MCF 10A (cell line): ENCODE measurements at regions of chr5 and their contacts with region 1.

Region 1: DNA sequence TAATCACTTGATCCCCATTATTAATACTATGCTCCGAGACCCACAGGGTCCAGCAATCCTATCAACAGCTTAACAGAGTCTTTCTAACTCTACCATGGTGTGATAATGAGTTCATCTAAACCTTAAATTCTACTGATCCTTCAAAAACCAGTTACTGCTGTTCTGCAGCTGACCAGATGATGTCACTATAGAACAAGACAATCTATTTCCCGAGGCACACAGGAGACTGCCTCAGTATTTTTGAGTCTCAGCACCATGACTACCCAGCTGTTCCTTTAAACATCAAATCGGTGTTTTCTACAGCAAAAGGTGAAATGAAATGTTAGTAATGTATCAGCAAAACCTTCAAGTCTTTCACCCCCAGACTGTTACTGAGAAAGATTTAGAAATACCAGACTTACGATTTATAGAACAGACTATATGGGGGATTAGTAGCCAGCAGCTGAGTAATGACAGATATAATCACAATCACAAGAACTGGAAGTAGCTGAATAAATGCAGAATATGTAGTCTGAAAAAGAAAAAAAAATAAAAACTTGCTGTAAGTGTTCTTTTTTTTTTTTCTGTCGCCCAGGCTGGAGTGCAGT is 16.9 kb downstream of the DNAJC18 start:
- DNase-seq: peak; percentile 84
- H3K4me3 Mint-ChIP-seq: no peak overlapping the region
- H3K27ac Mint-ChIP-seq: peak overlapping the region; percentile 57
- H3K4me1 Mint-ChIP-seq: no peaks in the 10 kb centered on the region
- H3K27me3 Mint-ChIP-seq: no peaks in the 10 kb centered on the region
- CTCF ChIP-seq: peak; percentile 93

Region 2: DNA sequence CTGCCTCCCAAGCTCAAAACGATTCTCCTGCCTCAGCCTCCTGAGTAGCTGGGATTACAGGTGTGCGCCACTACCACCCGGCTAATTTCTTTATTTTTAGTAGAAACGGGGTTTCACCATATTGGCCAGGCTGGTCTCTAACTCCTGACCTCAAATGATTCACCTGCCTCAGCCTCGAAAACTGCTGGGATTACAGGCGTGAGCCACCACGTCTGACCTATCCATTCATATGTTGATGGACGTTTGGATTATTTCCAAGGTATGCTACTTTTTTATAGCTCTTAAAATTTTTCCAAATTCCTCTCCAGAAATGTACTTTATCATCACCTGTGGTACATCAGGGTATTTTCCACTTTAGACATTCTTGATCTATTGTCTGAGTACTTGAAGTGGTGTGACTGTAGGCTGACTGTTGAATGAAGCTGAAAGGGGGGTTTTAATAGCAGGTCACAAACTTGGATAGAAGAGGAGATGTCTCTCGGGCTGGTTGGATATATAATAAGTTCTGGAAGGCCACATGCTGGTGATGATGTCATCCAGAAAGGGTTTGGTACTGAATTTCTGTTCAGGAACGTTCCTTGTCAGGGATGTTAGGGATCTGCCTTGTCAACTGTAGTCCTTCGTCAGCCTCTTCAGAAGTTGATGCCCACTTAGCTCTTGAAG is 661.8 kb before region 1 on chr5:
- CTCF ChIA-PET with region 1: no interaction called
- POLR2A ChIA-PET with region 1: no interaction called
- intact Hi-C with region 1: no loop called
- DNase-seq: peak; percentile 37
- H3K4me3 Mint-ChIP-seq: no peak overlapping the region
- H3K27ac Mint-ChIP-seq: peak overlapping the region; percentile 86
- H3K4me1 Mint-ChIP-seq: peaks cover 60% of the 10 kb centered on the region
- H3K27me3 Mint-ChIP-seq: no peaks in the 10 kb centered on the region
- CTCF ChIP-seq: no peak

Region 3: DNA sequence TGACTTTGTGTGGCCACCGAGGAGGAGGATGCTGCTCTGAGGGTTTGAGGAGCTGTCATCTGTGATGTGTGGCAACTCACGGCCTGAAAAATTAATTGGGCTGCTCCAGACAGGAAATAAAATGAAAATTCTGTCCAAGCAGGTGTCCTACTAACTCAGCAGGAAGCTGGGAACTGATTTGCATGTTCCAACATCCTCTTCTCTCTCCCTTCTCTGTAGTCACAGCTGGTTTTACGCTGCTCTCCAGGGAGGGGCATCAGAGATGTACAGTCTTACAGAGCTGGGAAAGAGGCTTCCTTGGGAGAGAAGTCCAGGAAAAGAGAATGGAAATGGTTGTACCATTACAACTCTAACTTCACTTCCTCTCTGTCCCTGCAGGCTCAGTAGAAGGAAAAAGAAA is 200.1 kb before region 1 on chr5:
- CTCF ChIA-PET with region 1: no interaction called
- POLR2A ChIA-PET with region 1: no interaction called
- intact Hi-C with region 1: no loop called
- DNase-seq: no peak
- H3K4me3 Mint-ChIP-seq: no peak overlapping the region
- H3K27ac Mint-ChIP-seq: no peak overlapping the region
- H3K4me1 Mint-ChIP-seq: peaks cover 5% of the 10 kb centered on the region
- H3K27me3 Mint-ChIP-seq: no peaks in the 10 kb centered on the region
- CTCF ChIP-seq: no peak

Region 4: GRCh38 chr5:139403787-139404483 is 18.5 kb before region 1 on chr5 and contains the start of gene SPATA24:
- CTCF ChIA-PET with region 1: interaction called, 111 read pairs
- POLR2A ChIA-PET with region 1: interaction called, 10 read pairs
- intact Hi-C with region 1: no loop called
- DNase-seq: peak; percentile 99
- H3K4me3 Mint-ChIP-seq: peak within 1 kb of the TSS; percentile 97
- H3K27ac Mint-ChIP-seq: peak within 1 kb of the TSS; percentile 99
- H3K4me1 Mint-ChIP-seq: peaks cover 23% of the 10 kb centered on the region
- H3K27me3 Mint-ChIP-seq: no peaks in the 10 kb centered on the region
- CTCF ChIP-seq: no peak
- total RNA-seq, gene SPATA24: 9.8 and 11.6 TPM in 2 replicates

Region 5: DNA sequence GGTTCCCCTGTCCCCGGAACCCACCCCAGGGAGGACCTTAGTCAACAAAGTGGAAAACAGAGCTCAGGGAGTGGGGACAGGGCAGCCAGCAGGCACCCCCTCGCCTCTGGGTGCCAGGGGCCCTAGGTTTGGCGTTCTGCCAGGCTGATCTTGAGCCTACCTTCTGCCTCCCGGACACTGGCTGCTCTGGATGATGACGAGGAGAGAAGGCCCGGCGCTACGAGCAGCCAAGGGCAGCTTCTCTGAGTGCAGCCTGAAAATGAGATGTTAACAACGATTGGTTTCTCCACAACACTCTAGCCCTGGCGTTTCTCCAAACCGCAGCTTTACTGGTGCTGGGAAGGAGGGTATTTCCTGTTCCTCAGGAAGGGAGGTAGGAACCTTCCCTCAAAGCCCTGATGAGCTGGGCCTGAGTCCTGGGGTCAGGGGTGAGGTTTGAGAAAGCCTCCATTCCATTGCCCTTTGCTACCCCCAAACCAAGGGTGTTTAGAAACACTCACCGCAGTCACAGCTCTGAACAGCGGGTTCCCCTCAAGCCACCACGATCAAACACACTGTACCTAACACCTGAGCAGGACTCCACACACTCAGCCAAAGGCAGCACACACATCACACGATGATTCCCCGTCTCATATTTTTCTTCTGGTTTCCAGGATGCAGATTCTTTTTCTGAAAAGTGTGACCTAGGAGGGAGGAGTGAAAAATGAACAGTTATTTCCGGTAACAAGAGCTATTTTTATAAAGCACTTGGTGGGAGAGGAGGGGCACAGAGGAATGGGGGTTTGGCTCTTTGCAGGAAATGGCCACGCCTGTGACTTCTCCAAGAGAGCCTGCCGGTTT is 59.9 kb after region 1 on chr5 and contains the start of gene STING1:
- CTCF ChIA-PET with region 1: interaction called, 13 read pairs
- POLR2A ChIA-PET with region 1: no interaction called
- intact Hi-C with region 1: no loop called
- DNase-seq: peak; percentile 100
- H3K4me3 Mint-ChIP-seq: peak within 1 kb of the TSS; percentile 77
- H3K27ac Mint-ChIP-seq: peak within 1 kb of the TSS; percentile 92
- H3K4me1 Mint-ChIP-seq: peaks cover 24% of the 10 kb centered on the region
- H3K27me3 Mint-ChIP-seq: no peaks in the 10 kb centered on the region
- CTCF ChIP-seq: peak; percentile 1
- total RNA-seq, gene STING1: 33.1 and 35.1 TPM in 2 replicates

Region 6: GRCh38 chr5:139501381-139501780 is 79.0 kb after region 1 on chr5:
- CTCF ChIA-PET with region 1: interaction called, 28 read pairs
- POLR2A ChIA-PET with region 1: no interaction called
- intact Hi-C with region 1: no loop called
- DNase-seq: no peak
- H3K4me3 Mint-ChIP-seq: no peak overlapping the region
- H3K27ac Mint-ChIP-seq: no peak overlapping the region
- H3K4me1 Mint-ChIP-seq: no peaks in the 10 kb centered on the region
- H3K27me3 Mint-ChIP-seq: no peaks in the 10 kb centered on the region
- CTCF ChIP-seq: no peak

Region 7: DNA sequence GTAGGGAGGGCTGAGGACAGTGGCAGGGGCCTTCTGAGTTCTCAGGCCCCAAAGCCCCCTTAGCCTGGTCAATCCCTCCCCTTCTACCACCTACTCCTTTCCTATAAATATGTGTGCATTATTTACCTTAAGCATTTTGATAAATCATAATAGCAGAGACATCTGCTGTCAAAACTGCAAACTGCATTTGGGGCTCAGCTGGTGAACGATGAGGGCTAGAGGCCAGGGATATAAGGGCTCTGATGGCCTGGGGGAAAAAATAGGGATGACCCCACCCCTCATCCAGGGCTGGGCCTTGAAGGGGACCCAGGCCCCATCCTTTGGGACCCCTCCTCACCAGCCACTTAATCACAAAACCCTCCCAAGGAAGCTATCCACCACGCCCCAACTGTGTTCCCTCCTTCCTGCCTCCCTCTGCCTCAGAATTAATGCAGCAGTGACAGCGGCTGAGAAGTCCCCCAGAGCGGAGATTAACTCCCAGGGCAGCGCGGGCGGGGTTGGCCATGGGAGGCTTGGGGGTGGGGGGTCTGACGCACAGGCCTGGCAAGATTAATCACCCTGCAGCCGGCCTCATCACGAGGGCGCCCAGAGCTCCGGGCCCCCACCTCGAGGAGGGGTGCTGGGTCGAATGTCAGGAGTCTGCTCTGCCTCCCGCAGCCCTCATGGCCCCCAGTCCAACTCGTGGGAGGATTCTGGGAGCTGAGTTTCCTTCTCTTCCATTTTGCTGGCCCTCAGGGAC is 267.8 kb after region 1 on chr5:
- CTCF ChIA-PET with region 1: interaction called, 18 read pairs
- POLR2A ChIA-PET with region 1: no interaction called
- intact Hi-C with region 1: loop called (anchors 1 kb)
- DNase-seq: peak; percentile 66
- H3K4me3 Mint-ChIP-seq: no peak overlapping the region
- H3K27ac Mint-ChIP-seq: no peak overlapping the region
- H3K4me1 Mint-ChIP-seq: peaks cover 6% of the 10 kb centered on the region
- H3K27me3 Mint-ChIP-seq: no peaks in the 10 kb centered on the region
- CTCF ChIP-seq: peak; percentile 84